Activated CD4-positive, alpha-beta memory T cell treated with anti-CD3 and anti-CD28 coated beads, Interleukin-2, amount 10 ng/mL, durations not matched to agents 7 days and 5 days (primary cell): ENCODE measurements at regions of chr16 and their contacts with region 1.

Region 1: DNA sequence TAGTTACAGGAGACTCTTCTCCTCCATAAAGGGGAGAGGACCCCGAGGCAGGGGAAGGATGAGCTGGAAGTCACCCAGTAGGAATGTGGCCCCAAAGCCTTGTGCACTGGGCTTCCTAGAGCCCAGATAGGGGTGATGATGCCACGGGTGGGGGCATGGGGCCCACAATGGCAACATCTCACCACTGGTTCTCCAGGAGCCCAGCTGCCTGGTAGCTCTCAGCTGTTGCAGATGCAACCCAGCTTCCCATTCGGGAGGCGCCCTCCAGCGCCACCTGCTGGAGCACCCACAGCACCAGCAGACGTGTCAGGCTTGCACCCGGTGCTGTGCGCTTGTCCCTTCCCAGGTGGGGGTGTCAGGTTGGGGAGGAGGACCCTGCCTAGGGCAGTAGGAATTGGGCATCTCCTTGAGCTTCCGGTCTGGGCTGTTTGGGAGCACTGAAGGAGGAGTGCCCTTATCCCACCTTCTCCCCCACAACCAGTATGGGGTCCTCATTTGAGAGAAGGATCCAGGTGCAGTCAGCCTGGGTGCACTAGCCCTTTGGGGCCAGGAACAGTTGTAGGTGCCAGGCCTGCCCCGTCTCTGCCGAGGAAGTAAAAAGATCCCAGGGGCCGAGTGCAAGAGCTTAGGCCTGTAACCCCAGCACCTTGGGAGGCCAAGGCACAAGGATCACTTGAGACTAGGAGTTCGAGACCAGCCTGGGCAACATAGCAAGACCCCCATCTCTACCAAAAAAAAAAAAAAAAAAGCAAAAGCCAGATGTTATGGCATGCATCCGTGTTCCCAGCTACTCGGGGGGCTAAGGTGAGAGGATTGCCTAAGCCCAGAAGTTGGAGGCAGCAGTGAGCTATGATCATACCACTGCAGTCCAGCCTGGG is 14.4 kb downstream of the CDIPT start:
- DNase-seq: peak; percentile 85
- H3K4me3 Mint-ChIP-seq: no peak overlapping the region
- H3K27ac Mint-ChIP-seq: peak overlapping the region; percentile 63
- H3K4me1 Mint-ChIP-seq: peaks cover 10% of the 10 kb centered on the region
- H3K27me3 Mint-ChIP-seq: no peaks in the 10 kb centered on the region

Region 2: DNA sequence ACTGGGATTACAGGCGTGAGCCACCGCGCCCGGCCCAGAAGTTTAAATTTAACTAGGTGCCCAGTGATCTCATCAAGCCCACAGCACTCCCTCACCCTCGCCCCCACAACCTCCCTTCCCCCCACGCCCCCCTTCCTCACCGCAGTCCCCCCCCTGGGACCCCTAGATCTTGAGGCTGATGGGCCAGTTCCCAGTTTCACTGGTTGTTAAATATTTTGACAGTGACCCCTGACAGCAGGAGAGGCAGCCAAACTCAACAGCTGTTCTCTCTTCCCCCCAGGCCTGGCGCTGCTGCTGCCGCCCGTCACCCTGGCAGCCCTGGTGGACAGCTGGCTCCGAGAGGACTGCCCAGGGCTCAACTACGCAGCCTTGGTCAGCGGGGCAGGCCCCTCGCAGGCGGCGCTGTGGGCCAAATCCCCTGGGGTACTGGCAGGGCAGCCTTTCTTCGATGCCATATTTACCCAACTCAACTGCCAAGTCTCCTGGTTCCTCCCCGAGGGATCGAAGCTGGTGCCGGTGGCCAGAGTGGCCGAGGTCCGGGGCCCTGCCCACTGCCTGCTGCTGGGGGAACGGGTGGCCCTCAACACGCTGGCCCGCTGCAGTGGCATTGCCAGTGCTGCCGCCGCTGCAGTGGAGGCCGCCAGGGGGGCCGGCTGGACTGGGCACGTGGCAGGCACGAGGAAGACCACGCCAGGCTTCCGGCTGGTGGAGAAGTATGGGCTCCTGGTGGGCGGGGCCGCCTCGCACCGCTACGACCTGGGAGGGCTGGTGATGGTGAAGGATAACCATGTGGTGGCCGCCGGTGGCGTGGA is 154.1 kb before region 1 on chr16:
- CTCF ChIA-PET with region 1: interaction called, 72 read pairs
- POLR2A ChIA-PET with region 1: interaction called, 33 read pairs
- DNase-seq: no peak
- H3K4me3 Mint-ChIP-seq: no peak overlapping the region
- H3K27ac Mint-ChIP-seq: no peak overlapping the region
- H3K4me1 Mint-ChIP-seq: peaks cover 16% of the 10 kb centered on the region
- H3K27me3 Mint-ChIP-seq: no peaks in the 10 kb centered on the region

Region 3: GRCh38 chr16:29729116-29729521 is 119.5 kb before region 1 on chr16:
- CTCF ChIA-PET with region 1: interaction called, 10 read pairs
- POLR2A ChIA-PET with region 1: no interaction called
- DNase-seq: no peak
- H3K4me3 Mint-ChIP-seq: no peak overlapping the region
- H3K27ac Mint-ChIP-seq: no peak overlapping the region
- H3K4me1 Mint-ChIP-seq: peaks cover 30% of the 10 kb centered on the region
- H3K27me3 Mint-ChIP-seq: peaks cover 16% of the 10 kb centered on the region

Region 4: DNA sequence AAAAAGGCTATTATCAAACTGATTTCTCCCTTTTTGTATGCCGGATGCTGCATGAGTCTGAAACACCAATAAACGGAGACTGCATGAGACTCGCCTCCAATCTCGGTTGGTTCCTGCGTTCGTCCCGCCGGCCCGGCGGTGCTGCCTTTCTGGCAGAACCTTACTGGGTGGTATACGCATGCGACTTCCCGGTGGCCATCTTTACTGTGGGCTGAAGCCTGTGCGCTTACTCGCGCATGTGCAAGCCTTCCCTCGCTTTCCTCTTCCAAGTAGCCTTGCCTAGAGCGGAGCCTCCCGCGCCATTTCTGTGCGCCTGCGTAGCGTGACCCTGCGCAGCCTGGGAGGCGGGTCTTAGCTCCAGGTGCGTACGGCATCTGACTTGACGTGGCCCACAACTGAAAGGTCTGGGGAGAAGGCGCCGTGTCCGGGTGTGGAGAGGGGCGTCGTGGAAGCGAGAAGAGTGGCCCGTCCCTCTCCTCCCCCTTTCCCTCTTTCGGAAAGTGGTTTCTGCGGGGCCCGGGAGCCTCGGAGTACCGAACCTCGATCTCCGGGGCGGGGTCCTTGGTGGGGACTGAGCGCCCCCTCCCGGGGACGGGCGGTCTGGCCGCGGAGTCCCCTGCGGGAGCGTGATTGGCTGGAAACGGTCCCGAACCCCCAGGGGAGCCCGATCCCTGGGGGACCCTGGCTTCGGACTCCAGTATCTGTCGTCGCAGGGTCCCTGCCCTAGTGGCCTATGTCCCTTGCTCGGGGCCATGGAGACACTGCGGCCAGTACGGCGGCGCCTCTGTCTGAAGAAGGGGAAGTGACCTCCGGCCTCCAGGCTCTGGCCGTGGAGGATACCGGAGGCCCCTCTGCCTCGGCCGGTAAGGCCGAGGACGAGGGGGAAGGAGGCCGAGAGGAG is 32.6 kb before region 1 on chr16 and contains the start of gene PAGR1:
- CTCF ChIA-PET with region 1: interaction called, 86 read pairs
- POLR2A ChIA-PET with region 1: interaction called, 17 read pairs
- DNase-seq: peak; percentile 99
- H3K4me3 Mint-ChIP-seq: peak within 1 kb of the TSS; percentile 94
- H3K27ac Mint-ChIP-seq: peak within 1 kb of the TSS; percentile 94
- H3K4me1 Mint-ChIP-seq: peaks cover 72% of the 10 kb centered on the region
- H3K27me3 Mint-ChIP-seq: peaks cover 11% of the 10 kb centered on the region
- total RNA-seq, gene PAGR1: 26.6 to 28.4 TPM

Region 5: DNA sequence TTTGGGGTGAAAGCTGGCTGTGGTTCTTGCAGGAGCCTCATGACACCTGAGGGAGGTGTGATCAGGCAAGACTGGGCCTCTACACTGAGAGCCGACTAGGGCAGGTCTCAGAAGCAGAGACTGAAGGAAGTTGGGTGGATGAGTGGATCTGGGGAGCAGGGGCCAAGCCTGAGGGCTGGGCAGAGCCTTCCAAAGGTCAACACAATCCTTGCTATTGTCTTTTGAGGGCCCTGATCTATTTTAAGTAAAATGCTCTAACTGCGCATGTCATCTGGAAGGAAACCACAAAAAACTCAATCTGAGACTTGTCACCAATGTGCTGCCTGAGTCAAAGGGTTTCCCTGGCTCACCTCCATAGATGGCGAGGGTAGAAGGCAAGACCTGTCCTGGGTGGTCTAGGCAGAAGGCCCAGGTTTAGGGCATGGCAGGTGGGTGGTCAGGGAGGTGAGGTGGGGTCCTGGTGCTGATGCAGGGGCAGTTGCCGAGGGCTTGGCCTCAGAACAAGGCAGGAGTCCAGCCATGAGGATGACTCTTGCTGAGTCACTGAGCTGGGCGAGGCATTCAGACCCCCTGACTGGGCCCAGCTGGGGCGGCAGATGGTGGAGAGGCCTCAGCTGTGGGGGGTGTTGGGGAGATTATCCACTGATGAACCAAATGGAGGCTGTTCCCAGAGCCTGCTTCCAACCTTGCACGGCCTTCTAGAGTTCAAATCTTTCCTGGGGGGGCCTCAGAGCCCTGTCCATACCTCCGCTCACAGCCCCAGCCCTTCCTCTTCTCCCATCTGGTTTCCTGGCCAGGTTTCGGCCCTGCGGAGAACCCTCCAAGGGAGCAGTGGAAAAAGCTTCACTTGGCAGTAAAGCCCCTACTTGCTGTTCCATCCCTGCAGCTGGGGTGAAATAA is 23.3 kb before region 1 on chr16:
- CTCF ChIA-PET with region 1: interaction called, 86 read pairs
- POLR2A ChIA-PET with region 1: interaction called, 15 read pairs
- DNase-seq: peak; percentile 49
- H3K4me3 Mint-ChIP-seq: peak overlapping the region; percentile 27
- H3K27ac Mint-ChIP-seq: peak overlapping the region; percentile 70
- H3K4me1 Mint-ChIP-seq: peaks cover 63% of the 10 kb centered on the region
- H3K27me3 Mint-ChIP-seq: no peaks in the 10 kb centered on the region

Region 6: GRCh38 chr16:29834079-29834478 is 14.6 kb before region 1 on chr16:
- CTCF ChIA-PET with region 1: interaction called, 24 read pairs
- POLR2A ChIA-PET with region 1: interaction called, 5 read pairs
- DNase-seq: no peak
- H3K4me3 Mint-ChIP-seq: no peak overlapping the region
- H3K27ac Mint-ChIP-seq: no peak overlapping the region
- H3K4me1 Mint-ChIP-seq: peaks cover 2% of the 10 kb centered on the region
- H3K27me3 Mint-ChIP-seq: no peaks in the 10 kb centered on the region

Region 7: GRCh38 chr16:29900102-29900887 is 51.6 kb after region 1 on chr16 and contains the start of gene ASPHD1:
- CTCF ChIA-PET with region 1: no interaction called
- POLR2A ChIA-PET with region 1: no interaction called
- DNase-seq: peak; percentile 66
- H3K4me3 Mint-ChIP-seq: peak within 1 kb of the TSS; percentile 58
- H3K27ac Mint-ChIP-seq: no peak within 1 kb of the TSS
- H3K4me1 Mint-ChIP-seq: peaks cover 9% of the 10 kb centered on the region
- H3K27me3 Mint-ChIP-seq: peaks cover 21% of the 10 kb centered on the region
- total RNA-seq, gene ASPHD1: 0.15 TPM in 1 of 2 experiments, not detected in the other

Region 8: GRCh38 chr16:29947897-29948296 is 99.2 kb after region 1 on chr16:
- CTCF ChIA-PET with region 1: no interaction called
- POLR2A ChIA-PET with region 1: no interaction called
- DNase-seq: no peak
- H3K4me3 Mint-ChIP-seq: no peak overlapping the region
- H3K27ac Mint-ChIP-seq: no peak overlapping the region
- H3K4me1 Mint-ChIP-seq: no peaks in the 10 kb centered on the region
- H3K27me3 Mint-ChIP-seq: peaks cover 5% of the 10 kb centered on the region

Region 9: DNA sequence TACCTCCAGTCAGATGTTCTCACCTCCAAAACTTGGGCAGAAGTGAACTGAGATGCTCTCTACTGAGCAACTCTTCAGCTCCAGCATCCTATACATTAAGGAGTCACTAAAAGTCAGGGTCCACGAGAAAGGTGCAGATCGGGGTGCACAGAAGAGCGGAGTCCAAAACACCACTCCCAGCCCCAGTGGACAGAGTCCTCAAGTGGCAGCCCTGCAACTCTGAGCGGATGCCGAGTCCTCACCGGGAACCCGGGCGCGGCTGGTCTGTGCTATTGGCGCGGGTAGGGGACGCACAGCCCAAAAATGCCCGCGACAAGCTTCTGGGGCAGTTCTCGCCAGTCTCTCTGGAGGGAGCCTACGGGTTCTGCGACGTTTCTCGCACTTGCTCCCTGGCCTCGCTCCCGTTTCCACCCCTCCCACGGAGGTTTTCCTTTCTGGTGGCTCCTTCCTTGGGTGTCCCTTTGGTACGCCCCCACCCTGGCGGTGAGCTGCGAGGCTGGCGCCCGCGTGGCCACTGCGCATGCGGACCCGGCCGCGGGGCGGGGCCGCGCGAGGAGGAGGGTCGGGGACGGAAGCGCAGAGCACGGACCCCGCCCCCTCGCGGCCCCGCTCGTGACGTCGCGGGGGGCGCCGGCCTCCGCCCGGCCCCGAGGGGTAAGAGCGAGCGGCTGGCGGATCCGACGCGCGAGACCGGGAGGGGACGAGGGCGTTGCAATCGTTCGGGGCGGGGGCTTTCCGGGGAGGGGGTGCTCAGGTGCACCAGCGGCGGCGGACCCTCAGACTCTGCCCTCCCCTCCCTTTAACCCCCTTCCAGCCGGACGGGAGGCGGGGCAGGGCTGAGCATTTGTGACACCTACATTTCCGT is 113.1 kb after region 1 on chr16 and contains the start of gene TMEM219:
- CTCF ChIA-PET with region 1: interaction called, 11 read pairs
- POLR2A ChIA-PET with region 1: interaction called, 4 read pairs
- DNase-seq: peak; percentile 94
- H3K4me3 Mint-ChIP-seq: peak within 1 kb of the TSS; percentile 87
- H3K27ac Mint-ChIP-seq: peak within 1 kb of the TSS; percentile 82
- H3K4me1 Mint-ChIP-seq: peaks cover 25% of the 10 kb centered on the region
- H3K27me3 Mint-ChIP-seq: no peaks in the 10 kb centered on the region
- total RNA-seq, gene TMEM219: 68.9 to 78.7 TPM